WTC11 (cell line): ENCODE measurements at regions of chr9 and their contacts with region 1.

Region 1: DNA sequence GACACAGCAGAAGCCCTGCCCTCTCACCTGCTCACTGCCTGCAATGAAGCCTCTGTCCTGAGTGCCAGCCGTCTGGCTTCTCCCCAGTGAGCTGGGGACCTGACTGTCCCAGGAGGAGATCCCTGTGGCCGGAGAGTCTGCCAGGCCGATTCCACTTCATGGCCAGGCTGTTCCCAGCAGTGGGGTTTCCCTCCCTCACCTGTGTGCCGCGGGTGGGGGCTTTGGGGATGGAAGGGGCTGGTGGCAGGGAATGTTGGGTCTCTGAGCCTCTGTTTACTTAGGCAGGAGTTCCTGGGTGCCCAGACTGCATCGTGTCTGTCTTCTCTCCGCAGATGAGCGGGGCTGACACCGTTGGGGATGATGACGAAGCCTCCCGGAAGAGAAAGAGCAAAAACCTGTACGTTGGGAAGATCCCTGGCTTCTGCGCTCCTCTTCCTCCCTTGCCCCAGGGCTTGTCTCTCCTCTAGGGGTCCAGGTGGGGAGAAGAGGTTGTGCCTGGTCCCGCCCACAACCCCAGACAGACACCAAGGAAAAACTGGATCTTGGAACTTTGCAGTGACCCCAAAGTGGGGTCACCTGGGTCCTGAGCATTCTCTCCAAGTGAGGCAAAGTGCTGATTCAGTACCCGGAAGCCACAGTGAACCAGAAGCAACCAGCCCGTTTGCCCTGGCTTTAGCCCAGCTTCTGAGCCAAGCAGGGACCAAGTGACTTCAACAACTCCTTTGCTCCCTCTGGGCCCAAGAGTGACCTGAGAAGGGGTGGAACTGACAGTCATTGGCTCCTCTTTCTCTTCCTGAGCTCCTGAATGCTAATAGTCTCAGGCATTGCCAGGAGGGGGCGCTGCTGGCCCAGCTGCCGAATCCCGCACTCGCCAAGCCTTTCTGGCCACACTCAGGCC is 127.7 kb downstream of the RGS3 start:
- DNase-seq: peak; percentile 91
- ATAC-seq: peak; percentile 55
- H3K4me3 Mint-ChIP-seq: no peak overlapping the region
- H3K27ac Mint-ChIP-seq: no peak overlapping the region
- H3K4me1 Mint-ChIP-seq: peaks cover 36% of the 10 kb centered on the region
- H3K27me3 Mint-ChIP-seq: no peaks in the 10 kb centered on the region
- CTCF ChIP-seq: peak; percentile 88

Region 2: GRCh38 chr9:113410207-113410864 is 180.9 kb before region 1 on chr9 and contains the starts of genes C9orf43 and POLE3:
- CTCF ChIA-PET with region 1: interaction called, 12 read pairs
- POLR2A ChIA-PET with region 1: interaction called, 6 read pairs
- DNase-seq: peak; percentile 90
- ATAC-seq: peak; percentile 90
- H3K4me3 Mint-ChIP-seq: peak within 1 kb of the TSS; percentile 87
- H3K27ac Mint-ChIP-seq: peak within 1 kb of the TSS; percentile 99
- H3K4me1 Mint-ChIP-seq: peaks cover 18% of the 10 kb centered on the region
- H3K27me3 Mint-ChIP-seq: no peaks in the 10 kb centered on the region
- CTCF ChIP-seq: no peak
- total RNA-seq, gene C9orf43: 0.28 to 0.46 TPM (median 0.30 TPM) in 3 replicates
- total RNA-seq, gene POLE3: 39.7 to 43.6 TPM (median 42.4 TPM) in 3 replicates

Region 3: GRCh38 chr9:113454914-113455761 is 136.1 kb before region 1 on chr9:
- CTCF ChIA-PET with region 1: interaction called, 13 read pairs
- POLR2A ChIA-PET with region 1: no interaction called
- DNase-seq: no peak
- ATAC-seq: peak; percentile 69
- H3K4me3 Mint-ChIP-seq: no peak overlapping the region
- H3K27ac Mint-ChIP-seq: peak overlapping the region; percentile 82
- H3K4me1 Mint-ChIP-seq: peaks cover 24% of the 10 kb centered on the region
- H3K27me3 Mint-ChIP-seq: no peaks in the 10 kb centered on the region
- CTCF ChIP-seq: no peak

Region 4: GRCh38 chr9:113514748-113515147 is 76.5 kb before region 1 on chr9:
- CTCF ChIA-PET with region 1: no interaction called
- POLR2A ChIA-PET with region 1: no interaction called
- DNase-seq: no peak
- ATAC-seq: no peak
- H3K4me3 Mint-ChIP-seq: no peak overlapping the region
- H3K27ac Mint-ChIP-seq: no peak overlapping the region
- H3K4me1 Mint-ChIP-seq: no peaks in the 10 kb centered on the region
- H3K27me3 Mint-ChIP-seq: no peaks in the 10 kb centered on the region
- CTCF ChIP-seq: no peak

Region 5: DNA sequence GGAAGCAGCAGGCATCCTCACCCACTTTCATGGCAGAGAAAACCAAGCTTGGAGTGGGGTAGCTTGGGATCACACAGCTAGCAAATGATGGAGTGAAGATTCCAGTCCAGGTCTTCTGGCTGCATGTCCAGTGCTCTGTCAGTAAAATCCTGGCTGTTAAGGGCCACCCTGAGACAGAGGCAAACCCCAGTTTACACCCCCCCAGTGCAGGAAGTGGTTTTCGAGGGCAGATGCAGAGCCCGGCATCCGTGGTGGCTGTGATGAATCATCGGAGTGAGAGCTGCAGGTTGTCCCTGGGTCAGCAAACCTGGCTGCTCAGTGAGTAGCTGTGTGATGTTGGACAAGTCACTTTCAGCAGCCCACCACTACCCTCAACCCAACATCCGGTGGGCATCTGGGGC is 12.4 kb before region 1 on chr9:
- CTCF ChIA-PET with region 1: interaction called, 27 read pairs
- POLR2A ChIA-PET with region 1: interaction called, 3 read pairs
- DNase-seq: no peak
- ATAC-seq: no peak
- H3K4me3 Mint-ChIP-seq: no peak overlapping the region
- H3K27ac Mint-ChIP-seq: no peak overlapping the region
- H3K4me1 Mint-ChIP-seq: peaks cover 24% of the 10 kb centered on the region
- H3K27me3 Mint-ChIP-seq: no peaks in the 10 kb centered on the region
- CTCF ChIP-seq: no peak

Region 6: DNA sequence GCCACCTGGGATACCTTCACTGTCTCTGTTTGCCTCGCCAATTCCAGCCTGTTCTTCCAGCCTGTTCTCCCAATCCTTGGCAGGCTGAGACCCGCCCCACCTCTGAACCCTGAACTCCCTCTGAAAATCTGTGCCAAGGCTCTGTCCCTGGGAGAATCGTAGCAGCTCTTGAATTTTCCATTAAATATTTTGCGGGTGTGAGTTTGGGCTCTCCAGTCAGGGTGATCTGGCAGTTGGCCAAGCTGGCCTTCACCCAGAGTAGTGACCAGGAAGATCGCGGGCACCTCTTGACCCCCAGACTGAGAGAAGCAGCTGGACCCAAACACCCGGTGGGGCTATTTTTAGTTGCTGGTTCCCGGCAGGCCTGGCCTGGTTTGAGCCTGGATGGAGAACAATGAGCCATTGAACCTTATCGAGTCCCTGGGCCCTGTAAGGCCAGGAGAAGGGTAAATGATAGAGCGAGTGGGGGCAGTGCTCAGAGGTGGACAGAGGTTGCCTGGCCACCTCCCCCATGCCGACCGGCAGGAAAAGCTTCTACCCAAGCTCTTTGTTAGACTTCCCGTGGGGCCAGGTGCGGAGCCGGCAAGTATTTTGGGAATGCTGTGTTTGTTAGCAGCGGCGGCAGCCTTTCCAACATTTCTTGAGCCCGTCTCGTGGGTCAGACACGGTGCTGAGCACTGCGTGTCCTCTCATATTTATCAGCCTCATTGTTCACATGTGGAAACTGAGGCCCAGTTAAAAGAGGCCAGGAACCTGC is 18.5 kb after region 1 on chr9:
- CTCF ChIA-PET with region 1: interaction called, 15 read pairs
- POLR2A ChIA-PET with region 1: interaction called, 6 read pairs
- DNase-seq: peak; percentile 58
- ATAC-seq: peak; percentile 80
- H3K4me3 Mint-ChIP-seq: peak overlapping the region; percentile 22; the same call in 1 of the 2 replicates
- H3K27ac Mint-ChIP-seq: peak overlapping the region; percentile 92
- H3K4me1 Mint-ChIP-seq: peaks cover 27% of the 10 kb centered on the region
- H3K27me3 Mint-ChIP-seq: no peaks in the 10 kb centered on the region
- CTCF ChIP-seq: no peak

Region 7: GRCh38 chr9:113664181-113664875 is 73.1 kb after region 1 on chr9:
- CTCF ChIA-PET with region 1: interaction called, 962 read pairs
- POLR2A ChIA-PET with region 1: interaction called, 3 read pairs
- DNase-seq: no peak
- ATAC-seq: no peak
- H3K4me3 Mint-ChIP-seq: no peak overlapping the region
- H3K27ac Mint-ChIP-seq: no peak overlapping the region
- H3K4me1 Mint-ChIP-seq: no peaks in the 10 kb centered on the region
- H3K27me3 Mint-ChIP-seq: peaks cover 8% of the 10 kb centered on the region
- CTCF ChIP-seq: no peak

Region 8: GRCh38 chr9:113844466-113844865 is 253.2 kb after region 1 on chr9:
- CTCF ChIA-PET with region 1: no interaction called
- POLR2A ChIA-PET with region 1: no interaction called
- DNase-seq: no peak
- ATAC-seq: no peak
- H3K4me3 Mint-ChIP-seq: no peak overlapping the region
- H3K27ac Mint-ChIP-seq: no peak overlapping the region
- H3K4me1 Mint-ChIP-seq: no peaks in the 10 kb centered on the region
- H3K27me3 Mint-ChIP-seq: no peaks in the 10 kb centered on the region; the same call in 1 of the 2 replicates
- CTCF ChIP-seq: no peak